Activated CD4-positive, alpha-beta memory T cell treated with anti-CD3 and anti-CD28 coated beads, Interleukin-2, amount 10 ng/mL, durations not matched to agents 7 days and 5 days (primary cell): ENCODE measurements at regions of chr1 and their contacts with region 1.

Region 1: GRCh38 chr1:173824331-173825081 is at the starts of genes CENPL and DARS2:
- DNase-seq: peak; percentile 94
- H3K4me3 Mint-ChIP-seq: peak within 1 kb of the TSS; percentile 85
- H3K27ac Mint-ChIP-seq: peak within 1 kb of the TSS; percentile 95
- H3K4me1 Mint-ChIP-seq: peaks cover 61% of the 10 kb centered on the region
- H3K27me3 Mint-ChIP-seq: no peaks in the 10 kb centered on the region
- total RNA-seq, gene CENPL: 28.2 to 29.4 TPM
- total RNA-seq, gene DARS2: 26.3 to 26.4 TPM

Region 2: GRCh38 chr1:173429471-173430402 is 394.8 kb before region 1 on chr1:
- CTCF ChIA-PET with region 1: interaction called, 62 read pairs
- POLR2A ChIA-PET with region 1: interaction called, 23 read pairs
- DNase-seq: peak; percentile 71
- H3K4me3 Mint-ChIP-seq: peak overlapping the region; percentile 36
- H3K27ac Mint-ChIP-seq: peak overlapping the region; percentile 84
- H3K4me1 Mint-ChIP-seq: peaks cover 29% of the 10 kb centered on the region
- H3K27me3 Mint-ChIP-seq: no peaks in the 10 kb centered on the region

Region 3: DNA sequence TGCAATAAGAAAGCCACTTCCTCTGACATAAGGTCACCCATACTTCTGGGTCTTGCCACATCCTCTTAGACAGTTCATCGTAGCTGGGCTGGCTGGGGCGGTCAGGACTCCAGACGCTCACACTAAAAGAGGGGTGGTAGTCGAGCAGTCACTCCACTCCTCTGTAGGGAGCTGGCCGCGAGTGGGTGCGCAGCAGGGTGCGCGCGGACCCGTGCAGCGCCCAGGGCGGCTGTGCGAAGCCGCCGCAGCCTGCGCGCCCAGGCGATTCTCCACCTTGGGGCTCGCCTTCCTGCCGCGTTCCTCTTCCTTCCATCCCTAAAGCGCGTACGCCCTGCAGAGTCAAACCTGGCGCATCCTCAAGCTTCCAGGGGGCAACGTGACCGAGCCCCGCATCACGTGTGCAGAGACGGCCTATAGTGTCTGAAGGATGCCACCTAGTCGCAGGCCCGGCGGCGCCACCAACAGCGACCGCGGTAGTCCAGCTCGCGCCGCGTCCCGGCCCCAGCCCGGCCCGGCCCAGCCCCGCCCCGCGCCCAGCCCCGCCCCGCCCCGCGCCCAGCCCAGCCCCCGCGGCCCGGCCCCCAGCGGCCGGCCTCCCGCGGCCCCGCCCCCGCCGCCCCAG is 347.7 kb before region 1 on chr1:
- CTCF ChIA-PET with region 1: interaction called, 3 read pairs
- POLR2A ChIA-PET with region 1: interaction called, 34 read pairs
- DNase-seq: peak; percentile 85
- H3K4me3 Mint-ChIP-seq: peak overlapping the region; percentile 91
- H3K27ac Mint-ChIP-seq: peak overlapping the region; percentile 95
- H3K4me1 Mint-ChIP-seq: peaks cover 56% of the 10 kb centered on the region
- H3K27me3 Mint-ChIP-seq: no peaks in the 10 kb centered on the region

Region 4: GRCh38 chr1:173714759-173715537 is 109.6 kb before region 1 on chr1 and contains the start of gene KLHL20:
- CTCF ChIA-PET with region 1: no interaction called
- POLR2A ChIA-PET with region 1: interaction called, 25 read pairs
- DNase-seq: peak; percentile 89
- H3K4me3 Mint-ChIP-seq: peak within 1 kb of the TSS; percentile 90
- H3K27ac Mint-ChIP-seq: peak within 1 kb of the TSS; percentile 97
- H3K4me1 Mint-ChIP-seq: peaks cover 24% of the 10 kb centered on the region
- H3K27me3 Mint-ChIP-seq: peaks cover 21% of the 10 kb centered on the region
- total RNA-seq, gene KLHL20: 17.7 to 18.9 TPM

Region 5: GRCh38 chr1:173862769-173863223 is 38.3 kb after region 1 on chr1:
- CTCF ChIA-PET with region 1: interaction called, 9 read pairs
- POLR2A ChIA-PET with region 1: interaction called, 139 read pairs
- DNase-seq: no peak
- H3K4me3 Mint-ChIP-seq: no peak overlapping the region
- H3K27ac Mint-ChIP-seq: peak overlapping the region; percentile 64
- H3K4me1 Mint-ChIP-seq: peaks cover 46% of the 10 kb centered on the region
- H3K27me3 Mint-ChIP-seq: no peaks in the 10 kb centered on the region

Region 6: DNA sequence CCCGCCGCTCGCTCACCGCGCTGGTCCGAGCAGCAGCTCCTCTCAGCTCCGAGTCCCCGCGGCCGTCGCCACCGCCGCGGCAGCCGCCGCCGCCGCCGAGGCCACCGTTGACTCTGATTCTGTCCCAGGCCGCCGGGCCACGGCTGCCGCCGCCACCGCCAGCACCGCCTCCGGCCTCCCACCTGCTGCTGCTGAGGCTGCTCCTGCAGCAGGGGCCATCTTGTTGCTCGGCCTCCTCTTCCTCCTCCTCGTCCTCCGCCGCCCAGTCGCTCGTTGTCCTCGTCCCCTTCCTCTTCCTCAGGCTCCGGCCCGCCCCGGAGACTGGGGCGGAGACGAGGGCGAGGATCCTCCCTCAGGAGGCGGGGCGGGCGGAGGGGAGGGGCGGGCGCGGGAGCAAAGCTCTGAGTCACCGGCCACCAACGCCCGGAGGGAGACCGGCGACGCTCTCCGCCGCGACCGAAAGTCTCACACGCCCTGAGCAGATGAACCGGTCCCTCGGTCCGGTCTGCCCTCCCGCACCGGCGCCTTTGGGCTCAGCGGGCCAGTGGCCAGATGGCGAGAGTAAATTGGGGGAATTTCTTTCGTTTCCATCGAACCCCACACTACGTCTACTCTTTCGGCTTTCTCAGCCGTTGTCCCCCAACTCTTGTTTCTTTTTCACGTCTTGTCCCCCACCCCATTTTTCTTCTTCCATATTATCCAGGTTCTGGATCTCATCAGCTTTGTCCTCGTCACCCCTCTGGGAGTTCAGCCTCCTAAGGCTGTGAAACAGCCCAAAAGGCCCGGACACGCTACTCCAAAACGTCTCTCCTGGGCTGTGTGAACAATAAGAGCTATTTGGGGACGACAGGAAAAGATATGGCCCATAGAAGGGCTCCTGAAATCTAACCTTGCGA is 197.8 kb after region 1 on chr1 and contains the start of gene RC3H1:
- CTCF ChIA-PET with region 1: interaction called, 4 read pairs
- POLR2A ChIA-PET with region 1: interaction called, 18 read pairs
- DNase-seq: peak; percentile 92
- H3K4me3 Mint-ChIP-seq: peak within 1 kb of the TSS; percentile 96
- H3K27ac Mint-ChIP-seq: peak within 1 kb of the TSS; percentile 89
- H3K4me1 Mint-ChIP-seq: peaks cover 37% of the 10 kb centered on the region
- H3K27me3 Mint-ChIP-seq: peaks cover 2% of the 10 kb centered on the region
- total RNA-seq, gene RC3H1: 29.6 to 33.6 TPM